ENCODE measurements at regions of chr13 and their contacts with region 1.

Region 1: GRCh38 chr13:50081679-50082425 is 66.6 kb downstream of the KCNRG start:
- DNase-seq: peak; percentile 98
- ATAC-seq: peak; percentile 82
- H3K4me3 ChIP-seq: peak overlapping the region; percentile 72 to 90
- H3K27ac ChIP-seq: peak overlapping the region; percentile 98
- H3K4me1 ChIP-seq: peaks cover 26 to 44% of the 10 kb centered on the region in 2 experiments
- H3K27me3 ChIP-seq: no peaks in the 10 kb centered on the region
- CTCF ChIP-seq: peak in 2 of 3 experiments; percentile 42 to 44; a peak in 4 of 6 replicates
- POLR2A ChIP-seq: peak; percentile 49
- RAD21 ChIP-seq: no peak

Region 2: DNA sequence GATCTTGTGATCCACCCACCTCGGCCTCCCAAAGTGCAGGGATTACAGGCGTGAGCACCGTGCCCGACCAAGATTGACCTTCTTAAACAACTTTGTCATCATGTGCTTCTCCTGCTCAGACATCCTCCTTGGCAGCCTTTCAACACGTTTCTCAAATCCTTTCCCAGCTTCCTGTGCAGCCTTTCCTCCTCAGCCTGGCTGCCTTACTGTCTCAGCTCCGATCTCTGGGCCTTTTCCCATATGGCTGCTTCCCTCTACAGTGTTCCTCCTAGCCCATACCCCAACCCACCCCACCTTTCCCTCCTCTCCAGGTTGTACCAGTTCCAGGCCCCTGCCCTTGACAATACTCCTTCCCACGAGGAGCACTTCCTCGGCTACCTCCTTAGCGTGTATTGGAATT is 578.9 kb before region 1 on chr13:
- CTCF ChIA-PET with region 1: no interaction called
- POLR2A ChIA-PET with region 1: no interaction called
- RAD21 ChIA-PET with region 1: no interaction called
- intact Hi-C with region 1: no loop called
- DNase-seq: no peak
- ATAC-seq: no peak
- H3K4me3 ChIP-seq: no peak overlapping the region
- H3K27ac ChIP-seq: no peak overlapping the region
- H3K4me1 ChIP-seq: no peaks in the 10 kb centered on the region
- H3K27me3 ChIP-seq: no peaks in the 10 kb centered on the region
- CTCF ChIP-seq: no peak
- POLR2A ChIP-seq: no peak
- RAD21 ChIP-seq: no peak

Region 3: GRCh38 chr13:49996951-49997895 is 84.6 kb before region 1 on chr13 and contains the start of gene TRIM13:
- CTCF ChIA-PET with region 1: interaction called, 7 read pairs
- POLR2A ChIA-PET with region 1: interaction called, 12 read pairs
- RAD21 ChIA-PET with region 1: no interaction called
- intact Hi-C with region 1: loop called (anchors 1 kb)
- DNase-seq: peak; percentile 71
- ATAC-seq: peak; percentile 82
- H3K4me3 ChIP-seq: peak within 1 kb of the TSS; percentile 80 to 84
- H3K27ac ChIP-seq: peak within 1 kb of the TSS; percentile 99
- H3K4me1 ChIP-seq: peaks cover 5 to 19% of the 10 kb centered on the region in 2 experiments; a peak in 3 of 4 replicates
- H3K27me3 ChIP-seq: no peaks in the 10 kb centered on the region
- CTCF ChIP-seq: peak; percentile 64 to 83 (median 76); a peak in 5 of 6 replicates
- POLR2A ChIP-seq: no peak
- RAD21 ChIP-seq: peak; percentile 70
- total RNA-seq, gene TRIM13: 24.6 TPM

Region 4: GRCh38 chr13:50208826-50209335 is 127.0 kb after region 1 on chr13:
- CTCF ChIA-PET with region 1: no interaction called
- POLR2A ChIA-PET with region 1: no interaction called
- RAD21 ChIA-PET with region 1: no interaction called
- intact Hi-C with region 1: loop called (anchors 5 kb)
- DNase-seq: no peak
- ATAC-seq: peak; percentile 89
- H3K4me3 ChIP-seq: peak overlapping the region; percentile 19 to 53
- H3K27ac ChIP-seq: peak overlapping the region; percentile 55
- H3K4me1 ChIP-seq: peaks cover 23 to 45% of the 10 kb centered on the region in 2 experiments
- H3K27me3 ChIP-seq: no peaks in the 10 kb centered on the region
- CTCF ChIP-seq: no peak
- POLR2A ChIP-seq: no peak
- RAD21 ChIP-seq: no peak

Region 5: DNA sequence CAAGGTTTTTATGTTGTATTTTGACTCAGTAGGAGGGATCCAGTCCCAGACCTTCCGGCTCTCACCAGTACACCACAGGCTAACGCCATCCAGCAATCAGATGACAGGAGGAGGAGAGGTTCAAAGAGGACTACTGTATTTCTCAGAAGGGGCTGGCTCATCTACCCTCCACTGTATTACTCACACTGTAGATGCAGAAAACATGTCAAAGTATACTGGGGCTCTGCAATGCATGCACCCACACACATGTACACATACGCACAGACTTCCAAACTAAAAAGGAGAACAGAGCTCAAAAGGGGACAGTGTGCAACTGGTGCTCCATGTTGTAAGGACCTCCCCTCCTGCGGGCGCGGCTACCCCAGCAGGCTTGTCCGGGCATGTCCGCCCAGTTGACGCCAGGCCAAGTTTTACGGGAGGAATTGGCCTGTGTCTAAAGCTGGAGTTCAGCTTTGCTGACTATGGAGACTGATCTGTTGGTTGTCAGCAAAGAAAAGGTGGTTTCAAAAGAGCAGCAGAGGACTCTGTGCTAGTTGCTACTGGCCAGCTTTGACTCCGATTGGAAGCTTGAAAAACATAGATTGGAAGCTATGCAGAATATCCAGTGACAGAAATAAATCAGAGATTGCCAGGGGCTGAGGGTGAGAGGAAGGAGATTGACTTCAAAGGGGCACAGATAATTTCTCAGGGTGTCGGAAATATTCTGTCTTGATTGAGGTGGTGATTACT is 447.5 kb after region 1 on chr13:
- CTCF ChIA-PET with region 1: no interaction called
- POLR2A ChIA-PET with region 1: interaction called, 4 read pairs
- RAD21 ChIA-PET with region 1: no interaction called
- intact Hi-C with region 1: loop called (anchors 1 kb)
- DNase-seq: peak; percentile 65
- ATAC-seq: peak; percentile 94
- H3K4me3 ChIP-seq: peak overlapping the region; percentile 7 to 41; a peak in 3 of 4 replicates
- H3K27ac ChIP-seq: peak overlapping the region; percentile 92
- H3K4me1 ChIP-seq: peaks cover 29 to 32% of the 10 kb centered on the region in 2 experiments
- H3K27me3 ChIP-seq: no peaks in the 10 kb centered on the region
- CTCF ChIP-seq: no peak
- POLR2A ChIP-seq: no peak
- RAD21 ChIP-seq: no peak

Region 6: DNA sequence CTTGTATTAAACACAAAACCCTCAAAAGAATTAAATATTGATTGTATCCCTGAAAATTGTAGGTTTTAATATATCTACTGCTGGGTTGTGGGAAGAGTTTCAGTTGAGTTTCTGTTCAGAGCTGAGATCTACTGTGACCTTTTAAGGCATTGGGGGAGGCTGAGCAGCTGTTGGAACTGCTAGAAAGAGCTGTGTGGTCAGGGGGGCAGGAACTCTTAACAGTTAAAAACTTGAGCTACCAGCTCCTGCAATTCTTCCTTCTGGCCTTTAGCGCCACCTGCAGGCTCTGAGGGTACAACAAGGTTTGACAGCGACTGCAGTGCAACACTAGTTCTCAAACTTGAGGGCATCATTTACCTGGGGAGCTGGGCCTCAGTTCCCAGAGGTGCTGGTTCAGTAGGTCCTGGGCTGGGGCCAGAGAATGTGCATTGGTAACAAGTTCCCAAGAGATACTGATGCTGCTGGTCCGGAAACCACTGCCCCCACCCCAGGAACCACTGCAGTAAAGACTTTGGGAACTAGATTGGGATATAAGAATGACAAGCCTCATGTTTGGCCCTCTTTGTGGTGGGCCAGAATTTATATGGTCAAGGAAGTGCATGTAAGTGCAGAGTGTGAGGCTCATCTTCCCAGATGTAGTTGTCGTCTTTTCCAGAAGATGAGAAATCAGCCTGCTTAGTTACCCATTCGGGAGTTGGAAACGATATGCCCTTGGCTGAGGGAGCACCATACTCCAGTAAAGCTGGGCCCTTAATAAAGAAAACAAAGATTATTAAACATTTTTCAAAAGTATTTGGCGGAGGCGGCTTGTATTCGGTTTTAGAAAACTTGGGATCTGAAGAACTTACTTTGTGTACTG is 830.3 kb after region 1 on chr13:
- CTCF ChIA-PET with region 1: interaction called, 4 read pairs
- POLR2A ChIA-PET with region 1: no interaction called
- RAD21 ChIA-PET with region 1: no interaction called
- intact Hi-C with region 1: loop called (anchors 2 kb)
- DNase-seq: peak; percentile 80
- ATAC-seq: peak; percentile 18; the same call in 1 of the 2 replicates
- H3K4me3 ChIP-seq: no peak overlapping the region
- H3K27ac ChIP-seq: no peak overlapping the region
- H3K4me1 ChIP-seq: peaks cover 12 to 25% of the 10 kb centered on the region in 2 experiments; a peak in 3 of 4 replicates
- H3K27me3 ChIP-seq: no peaks in the 10 kb centered on the region
- CTCF ChIP-seq: peak; percentile 63 to 88 (median 87); a peak in 5 of 6 replicates
- POLR2A ChIP-seq: no peak
- RAD21 ChIP-seq: peak; percentile 81

Region 7: GRCh38 chr13:50991579-50992521 is 910.0 kb after region 1 on chr13:
- CTCF ChIA-PET with region 1: no interaction called
- POLR2A ChIA-PET with region 1: no interaction called
- RAD21 ChIA-PET with region 1: no interaction called
- intact Hi-C with region 1: no loop called
- DNase-seq: no peak
- ATAC-seq: no peak
- H3K4me3 ChIP-seq: no peak overlapping the region
- H3K27ac ChIP-seq: no peak overlapping the region
- H3K4me1 ChIP-seq: no peaks in the 10 kb centered on the region
- H3K27me3 ChIP-seq: no peaks in the 10 kb centered on the region
- CTCF ChIP-seq: no peak
- POLR2A ChIP-seq: no peak
- RAD21 ChIP-seq: no peak

Measured in HCT116 (cell line).